ENCODE measurements at regions of chr10 and their contacts with region 1.

Region 1: GRCh38 chr10:110746254-110746826 is 102.2 kb downstream of the RBM20 start:
- DNase-seq: peak; percentile 67
- ATAC-seq: peak; percentile 32
- H3K4me3 Mint-ChIP-seq: no peak overlapping the region
- H3K27ac Mint-ChIP-seq: peak overlapping the region; percentile 86
- H3K4me1 Mint-ChIP-seq: peaks cover 74% of the 10 kb centered on the region
- H3K27me3 Mint-ChIP-seq: no peaks in the 10 kb centered on the region
- CTCF ChIP-seq: peak; percentile 97

Region 2: GRCh38 chr10:110556969-110557601 is 189.3 kb before region 1 on chr10:
- CTCF ChIA-PET with region 1: no interaction called
- POLR2A ChIA-PET with region 1: no interaction called
- intact Hi-C with region 1: no loop called
- DNase-seq: peak; percentile 89
- ATAC-seq: peak; percentile 99
- H3K4me3 Mint-ChIP-seq: no peak overlapping the region
- H3K27ac Mint-ChIP-seq: no peak overlapping the region
- H3K4me1 Mint-ChIP-seq: peaks cover 8% of the 10 kb centered on the region
- H3K27me3 Mint-ChIP-seq: peaks cover 4% of the 10 kb centered on the region
- CTCF ChIP-seq: peak; percentile 71

Region 3: GRCh38 chr10:110610308-110610774 is 136.0 kb before region 1 on chr10:
- CTCF ChIA-PET with region 1: interaction called, 11 read pairs
- POLR2A ChIA-PET with region 1: no interaction called
- intact Hi-C with region 1: loop called (anchors 5 kb)
- DNase-seq: peak; percentile 62
- ATAC-seq: peak; percentile 50
- H3K4me3 Mint-ChIP-seq: no peak overlapping the region
- H3K27ac Mint-ChIP-seq: no peak overlapping the region
- H3K4me1 Mint-ChIP-seq: peaks cover 46% of the 10 kb centered on the region
- H3K27me3 Mint-ChIP-seq: no peaks in the 10 kb centered on the region
- CTCF ChIP-seq: peak; percentile 89

Region 4: DNA sequence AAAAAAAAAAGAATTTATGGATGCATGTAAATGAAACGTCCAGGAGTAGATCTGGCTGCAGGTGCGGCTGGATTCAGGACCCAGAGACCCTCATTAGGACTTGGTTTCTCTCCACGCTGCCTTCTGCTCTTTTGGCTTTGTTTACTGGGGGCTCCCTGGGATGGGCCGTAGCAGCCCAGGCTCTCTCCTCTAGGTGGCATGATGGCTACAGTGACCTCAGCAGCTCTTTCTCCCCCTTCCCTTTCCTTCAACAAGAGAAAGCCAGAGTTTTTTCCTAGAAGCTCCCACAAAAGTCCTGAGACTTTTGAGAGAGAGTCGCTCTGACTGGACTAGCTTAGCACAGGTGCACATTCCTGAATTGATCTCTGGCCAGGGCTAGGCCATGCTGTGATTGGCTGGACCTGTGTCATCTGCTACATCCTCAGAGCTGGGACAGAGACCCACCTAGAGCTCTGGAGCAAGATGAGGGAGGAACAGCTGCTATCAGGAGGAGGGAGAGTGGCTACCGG is 57.5 kb after region 1 on chr10:
- CTCF ChIA-PET with region 1: interaction called, 22 read pairs
- POLR2A ChIA-PET with region 1: interaction called, 5 read pairs
- intact Hi-C with region 1: no loop called
- DNase-seq: peak; percentile 67
- ATAC-seq: peak; percentile 75
- H3K4me3 Mint-ChIP-seq: peak overlapping the region; percentile 9
- H3K27ac Mint-ChIP-seq: peak overlapping the region; percentile 79
- H3K4me1 Mint-ChIP-seq: peaks cover 44% of the 10 kb centered on the region
- H3K27me3 Mint-ChIP-seq: no peaks in the 10 kb centered on the region
- CTCF ChIP-seq: peak; percentile 62

Region 5: DNA sequence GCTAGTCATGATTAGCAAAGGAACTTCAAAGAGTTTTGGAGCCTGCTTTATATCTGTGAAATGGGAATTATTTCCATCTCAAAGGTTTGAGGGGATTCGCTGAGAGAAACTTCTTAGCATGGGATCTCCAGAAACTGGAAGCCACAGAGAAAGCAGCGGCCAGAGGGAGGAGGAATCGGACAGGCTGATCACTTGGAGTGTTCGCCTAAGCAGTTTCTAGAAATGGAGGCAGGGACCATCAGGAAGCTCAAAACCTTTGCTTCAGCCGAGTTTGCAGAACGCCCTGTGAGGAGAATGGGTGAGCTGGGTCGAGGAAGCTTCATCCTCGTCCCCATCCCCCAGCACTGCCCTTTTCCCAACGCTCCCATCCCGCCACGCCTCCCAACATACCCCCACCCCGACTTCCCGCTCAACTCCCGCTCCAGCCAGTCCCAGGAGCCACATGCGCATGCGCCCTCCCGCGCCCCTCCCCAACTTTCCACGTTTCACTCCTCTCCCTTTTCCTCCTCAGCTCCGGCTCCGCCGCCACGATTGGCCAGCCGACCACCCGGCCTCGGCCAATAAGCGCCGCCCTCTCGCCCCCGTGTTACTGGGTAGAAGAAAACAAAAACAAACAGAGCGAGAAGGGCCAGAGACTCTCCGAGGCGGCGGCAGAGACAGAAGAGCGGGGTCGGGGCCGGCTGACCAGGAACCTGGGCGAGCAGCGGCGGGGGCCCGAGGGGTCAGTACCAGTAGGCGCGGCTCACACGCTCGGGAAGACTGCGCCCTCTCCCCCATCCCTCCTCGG is 125.2 kb after region 1 on chr10 and contains the start of gene PDCD4:
- CTCF ChIA-PET with region 1: interaction called, 5 read pairs
- POLR2A ChIA-PET with region 1: interaction called, 9 read pairs
- intact Hi-C with region 1: loop called (anchors 5 kb)
- DNase-seq: peak; percentile 97
- ATAC-seq: peak; percentile 75
- H3K4me3 Mint-ChIP-seq: peak within 1 kb of the TSS; percentile 86
- H3K27ac Mint-ChIP-seq: peak within 1 kb of the TSS; percentile 95
- H3K4me1 Mint-ChIP-seq: peaks cover 59% of the 10 kb centered on the region
- H3K27me3 Mint-ChIP-seq: no peaks in the 10 kb centered on the region
- CTCF ChIP-seq: no peak
- total RNA-seq, gene PDCD4: 186 to 190 TPM

Region 6: DNA sequence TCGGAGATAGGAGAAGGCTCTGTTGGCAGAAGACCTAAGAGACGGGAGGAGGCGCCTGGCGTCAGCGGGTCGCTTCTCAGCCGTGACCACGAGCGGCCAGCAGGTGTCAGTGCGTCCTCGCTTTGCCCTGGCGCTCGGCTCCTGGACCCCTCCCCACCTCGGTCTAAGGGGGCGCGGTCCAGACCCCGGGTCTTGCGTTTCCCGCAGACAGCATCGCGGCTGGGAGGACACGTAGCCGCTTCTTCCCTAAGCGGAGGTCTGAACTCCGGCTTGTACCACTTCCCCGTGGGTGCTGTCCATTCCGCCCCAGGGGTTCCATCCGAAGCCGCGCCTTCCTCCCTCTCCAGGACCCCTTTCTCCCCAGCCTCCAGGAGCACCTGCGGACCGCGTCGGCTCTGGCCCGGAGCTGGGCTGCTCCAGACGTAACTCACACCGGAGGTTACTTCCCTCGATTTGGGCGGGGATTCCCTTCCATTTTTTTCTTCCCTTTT is 329.9 kb after region 1 on chr10:
- CTCF ChIA-PET with region 1: interaction called, 3 read pairs
- POLR2A ChIA-PET with region 1: no interaction called
- intact Hi-C with region 1: loop called (anchors 5 kb)
- DNase-seq: peak; percentile 69
- ATAC-seq: peak; percentile 76
- H3K4me3 Mint-ChIP-seq: peak overlapping the region; percentile 64
- H3K27ac Mint-ChIP-seq: no peak overlapping the region
- H3K4me1 Mint-ChIP-seq: peaks cover 4% of the 10 kb centered on the region
- H3K27me3 Mint-ChIP-seq: peaks cover 61% of the 10 kb centered on the region
- CTCF ChIP-seq: peak; percentile 87

Measured in activated CD8-positive, alpha-beta T cell treated with anti-CD3 and anti-CD28 coated beads for 36 hours (primary cell).